Right ventricle myocardium inferior (tissue), 1 donor: ENCODE measurements at regions of chr1 and their contacts with region 1.

Region 1: DNA sequence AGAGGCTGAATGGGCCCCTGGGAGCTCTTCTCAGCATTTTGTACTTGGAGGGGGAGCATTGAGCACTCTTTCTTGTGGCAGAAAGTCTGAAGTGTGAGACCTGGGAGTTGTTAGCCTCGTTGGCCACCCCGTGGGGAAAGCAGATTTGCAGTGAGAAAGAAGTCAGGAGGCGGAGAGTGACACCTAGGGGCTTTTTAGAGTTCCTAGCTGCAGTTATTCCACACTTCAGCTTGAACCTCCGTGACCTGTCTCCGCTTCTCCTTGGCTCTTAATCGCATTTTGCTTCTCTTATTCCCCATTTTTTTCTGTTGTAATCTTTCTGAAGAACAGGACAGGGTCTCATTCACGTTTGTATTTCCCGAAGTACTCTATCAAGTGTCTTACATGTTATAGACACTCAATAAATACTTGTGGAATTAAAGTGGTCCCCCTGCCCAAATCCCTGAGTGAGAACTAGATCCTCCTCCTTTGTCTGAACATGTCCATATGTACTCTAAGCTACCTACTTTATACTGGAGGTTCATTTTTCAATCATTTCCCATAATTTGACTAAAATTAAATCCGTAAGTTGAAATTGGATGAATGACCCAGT is 14.5 kb upstream of the C1orf141 start:
- DNase-seq: no peak
- ATAC-seq: peak; percentile 94

Region 2: GRCh38 chr1:66764994-66765578 is 384.2 kb before region 1 on chr1:
- intact Hi-C with region 1: loop called (anchors 5 kb)
- DNase-seq: no peak
- ATAC-seq: no peak

Region 3: GRCh38 chr1:66957938-66958337 is 191.3 kb before region 1 on chr1:
- intact Hi-C with region 1: no loop called
- DNase-seq: no peak
- ATAC-seq: no peak

Region 4: GRCh38 chr1:66996018-66996682 is 153.1 kb before region 1 on chr1:
- intact Hi-C with region 1: loop called (anchors 1 kb)
- DNase-seq: no peak
- ATAC-seq: peak; percentile 33

Region 5: GRCh38 chr1:67019600-67020136 is 129.6 kb before region 1 on chr1:
- intact Hi-C with region 1: no loop called
- DNase-seq: no peak
- ATAC-seq: peak; percentile 52

Region 6: GRCh38 chr1:67053785-67054772 is 95.2 kb before region 1 on chr1 and contains the start of gene SLC35D1:
- intact Hi-C with region 1: loop called (anchors 5 kb)
- DNase-seq: peak; percentile 89
- ATAC-seq: peak; percentile 89
- total RNA-seq, gene SLC35D1: 3.2 TPM

Region 7: GRCh38 chr1:67077593-67077992 is 71.7 kb before region 1 on chr1:
- intact Hi-C with region 1: no loop called
- DNase-seq: no peak
- ATAC-seq: no peak